SK-N-SH (cell line): ENCODE measurements at regions of chr18 and their contacts with region 1.

Region 1: GRCh38 chr18:48412339-48412929 is 3.3 kb upstream of the ZBTB7C start:
- DNase-seq: peak; percentile 66
- H3K4me3 ChIP-seq: no peak overlapping the region; a peak in 1 of 4 replicates
- H3K27ac ChIP-seq: no peak overlapping the region
- H3K4me1 ChIP-seq: peaks cover 0 to 16% of the 10 kb centered on the region in 2 experiments; a peak in 1 of 4 replicates
- H3K27me3 ChIP-seq: peaks cover 48% of the 10 kb centered on the region
- CTCF ChIP-seq: peak; percentile 79
- EP300 ChIP-seq: no peak
- RAD21 ChIP-seq: peak; percentile 64

Region 2: DNA sequence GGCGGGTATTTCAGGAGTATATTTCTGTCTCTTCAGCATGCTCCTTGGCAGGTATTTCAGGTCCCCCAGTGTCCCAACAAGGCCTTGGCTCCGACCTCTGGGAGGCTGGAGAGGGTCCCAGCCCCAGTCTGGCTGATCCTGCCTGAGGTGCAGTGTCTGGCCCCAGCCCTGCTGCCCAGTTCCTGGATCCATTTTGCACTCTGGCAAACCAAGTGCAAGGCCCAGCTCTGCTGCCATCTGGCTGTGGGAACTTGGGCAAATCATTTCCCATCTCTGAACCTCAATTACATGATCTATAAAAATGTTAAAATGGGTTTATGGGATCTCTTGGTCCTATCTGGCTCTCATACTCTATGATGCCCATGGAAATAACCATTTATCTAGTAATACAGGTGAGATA is 66.8 kb before region 1 on chr18:
- CTCF ChIA-PET with region 1: interaction called, 10 read pairs
- POLR2A ChIA-PET with region 1: no interaction called
- DNase-seq: no peak
- H3K4me3 ChIP-seq: no peak overlapping the region
- H3K27ac ChIP-seq: no peak overlapping the region
- H3K4me1 ChIP-seq: peaks cover 0 to 54% of the 10 kb centered on the region in 2 experiments; a peak in 1 of 4 replicates
- H3K27me3 ChIP-seq: peaks cover 13% of the 10 kb centered on the region
- CTCF ChIP-seq: peak; percentile 54
- EP300 ChIP-seq: no peak
- RAD21 ChIP-seq: peak; percentile 63

Region 3: GRCh38 chr18:48428475-48429177 is 16.2 kb after region 1 on chr18:
- CTCF ChIA-PET with region 1: interaction called, 14 read pairs
- POLR2A ChIA-PET with region 1: no interaction called
- DNase-seq: no peak
- H3K4me3 ChIP-seq: no peak overlapping the region
- H3K27ac ChIP-seq: no peak overlapping the region
- H3K4me1 ChIP-seq: no peaks in the 10 kb centered on the region; a peak in 1 of 4 replicates
- H3K27me3 ChIP-seq: peaks cover 26% of the 10 kb centered on the region; the same call in 1 of the 2 replicates
- CTCF ChIP-seq: no peak
- EP300 ChIP-seq: no peak
- RAD21 ChIP-seq: no peak